Colonic mucosa (tissue), 4 donors: ENCODE measurements at regions of chr6 and their contacts with region 1.

Region 1: GRCh38 chr6:89122625-89123024 is 4.8 kb upstream of the SRSF12 start:
- DNase-seq: no peak
- H3K4me3 ChIP-seq: no peak overlapping the region
- H3K27ac ChIP-seq: no peak overlapping the region
- H3K4me1 ChIP-seq: no peaks in the 10 kb centered on the region
- H3K27me3 ChIP-seq: no peaks in the 10 kb centered on the region
- CTCF ChIP-seq: peak; percentile 35

Region 2: GRCh38 chr6:89242574-89243330 is 120.1 kb after region 1 on chr6:
- intact Hi-C with region 1: loop called (anchors 2 kb)
- DNase-seq: no peak
- H3K4me3 ChIP-seq: no peak overlapping the region
- H3K27ac ChIP-seq: no peak overlapping the region
- H3K4me1 ChIP-seq: no peaks in the 10 kb centered on the region
- H3K27me3 ChIP-seq: no peaks in the 10 kb centered on the region
- CTCF ChIP-seq: peak; percentile 34

Region 3: DNA sequence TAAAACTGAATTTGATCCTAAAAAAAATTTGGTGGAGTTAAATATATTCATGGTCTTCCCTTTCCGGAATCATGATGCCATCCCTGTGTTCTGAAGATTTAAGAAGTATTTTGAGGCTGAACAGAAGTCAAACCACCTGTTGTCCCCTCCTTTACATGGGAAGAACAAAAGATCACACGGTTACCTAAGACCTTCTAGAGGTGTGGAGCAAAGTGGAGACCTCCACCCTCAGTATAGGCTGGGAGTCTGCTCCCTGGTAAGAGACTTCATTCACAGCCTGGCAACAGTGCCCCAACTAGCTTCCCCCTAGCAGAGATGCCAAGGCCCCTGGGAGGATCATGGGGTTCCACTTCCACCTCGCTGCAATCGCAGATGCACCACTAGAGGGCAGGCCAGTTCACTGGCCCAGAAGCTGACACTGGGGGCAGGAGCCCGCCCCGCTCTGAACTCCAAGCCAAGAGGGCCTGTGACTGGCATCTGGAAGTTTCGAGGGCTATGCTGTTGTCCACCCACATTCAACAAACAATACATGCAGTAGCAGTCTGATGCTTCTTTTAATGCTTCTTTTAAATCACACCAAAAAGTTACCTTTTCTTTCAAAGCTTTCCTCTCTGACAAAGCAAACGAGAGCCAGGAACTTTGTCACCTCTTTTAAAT is 249.4 kb after region 1 on chr6:
- intact Hi-C with region 1: loop called (anchors 5 kb)
- DNase-seq: peak; percentile 76
- H3K4me3 ChIP-seq: no peak overlapping the region
- H3K27ac ChIP-seq: no peak overlapping the region
- H3K4me1 ChIP-seq: no peaks in the 10 kb centered on the region
- H3K27me3 ChIP-seq: no peaks in the 10 kb centered on the region
- CTCF ChIP-seq: peak; percentile 84